Activated naive CD4-positive, alpha-beta T cell treated with anti-CD3 and anti-CD28 coated beads for 36 hours (primary cell): ENCODE measurements at regions of chr11 and their contacts with region 1.

Region 1: GRCh38 chr11:47552566-47553416 is at the start of gene CELF1:
- DNase-seq: peak; percentile 95
- H3K4me3 Mint-ChIP-seq: peak within 1 kb of the TSS; percentile 97
- H3K27ac Mint-ChIP-seq: peak within 1 kb of the TSS; percentile 95
- H3K4me1 Mint-ChIP-seq: peaks cover 42% of the 10 kb centered on the region
- H3K27me3 Mint-ChIP-seq: no peaks in the 10 kb centered on the region
- total RNA-seq, gene CELF1: 104 to 105 TPM

Region 2: DNA sequence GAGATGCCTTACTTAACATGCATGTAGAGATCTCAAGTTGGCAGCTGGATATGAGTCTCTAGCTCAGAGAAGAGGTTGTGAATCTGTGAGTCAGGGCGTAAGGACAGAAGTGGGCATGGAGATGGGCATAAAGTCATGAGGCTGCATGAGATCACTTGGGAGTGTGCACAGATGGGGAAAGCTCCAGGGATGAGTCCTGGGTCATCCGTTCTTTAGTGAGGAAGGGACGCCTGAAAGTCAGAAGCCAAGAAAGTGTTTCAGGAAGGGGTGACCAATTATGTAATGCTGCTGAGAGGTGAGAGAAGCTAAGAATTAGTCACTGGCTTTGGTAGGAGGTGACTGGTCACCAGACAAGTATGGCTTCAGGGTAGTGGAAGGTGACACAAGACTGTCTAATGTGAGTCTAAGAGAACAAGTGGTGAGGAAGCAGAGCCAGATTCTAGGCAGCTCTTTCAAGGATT is 310.9 kb before region 1 on chr11:
- CTCF ChIA-PET with region 1: no interaction called
- intact Hi-C with region 1: no loop called
- DNase-seq: no peak
- H3K4me3 Mint-ChIP-seq: no peak overlapping the region
- H3K27ac Mint-ChIP-seq: peak overlapping the region; percentile 60
- H3K4me1 Mint-ChIP-seq: peaks cover 4% of the 10 kb centered on the region
- H3K27me3 Mint-ChIP-seq: no peaks in the 10 kb centered on the region

Region 3: DNA sequence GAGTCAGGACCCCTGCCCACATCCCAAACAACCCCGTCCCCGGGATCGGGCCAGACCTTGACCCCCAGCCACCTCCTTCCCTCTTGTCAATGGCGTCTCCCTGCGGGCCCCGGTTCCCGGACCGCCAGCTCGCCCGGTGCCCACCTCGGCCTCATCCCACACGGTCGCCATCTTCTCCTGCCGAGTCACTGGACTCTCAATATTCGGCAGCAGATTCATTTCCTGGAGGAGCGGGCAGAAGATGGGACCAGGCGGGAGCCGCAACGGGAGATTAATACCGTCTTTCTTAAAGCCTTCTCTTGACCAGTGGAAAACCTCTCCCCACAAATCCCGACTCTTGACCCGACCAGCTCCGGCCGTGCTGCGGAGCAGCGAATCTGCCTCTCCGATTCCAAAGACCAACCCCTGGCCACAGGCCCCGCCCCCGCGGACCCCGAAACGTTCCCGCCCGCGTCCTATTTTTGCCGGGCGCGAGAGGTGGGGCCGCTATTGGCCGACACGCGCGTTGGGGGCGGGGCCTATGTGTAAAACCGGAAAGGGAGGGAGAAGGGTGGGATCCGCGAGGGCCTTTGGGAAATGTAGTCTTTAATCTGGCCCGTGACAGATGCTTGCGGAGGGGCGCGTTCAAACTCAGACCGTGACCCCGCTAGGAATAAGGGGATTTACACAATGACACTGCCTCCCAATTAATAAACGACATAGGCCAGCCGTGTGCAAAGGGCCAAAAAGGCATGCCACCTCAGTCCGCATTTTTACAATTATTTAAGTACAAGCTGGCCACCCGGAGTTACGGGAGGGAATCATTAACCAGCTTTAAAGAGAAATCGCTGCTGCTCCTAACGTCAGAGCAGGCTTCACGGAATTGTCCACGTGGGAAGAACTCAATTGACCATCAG is 126.5 kb before region 1 on chr11 and contains the start of gene PSMC3:
- CTCF ChIA-PET with region 1: no interaction called
- intact Hi-C with region 1: loop called (anchors 1 kb)
- DNase-seq: peak; percentile 99
- H3K4me3 Mint-ChIP-seq: peak within 1 kb of the TSS; percentile 98
- H3K27ac Mint-ChIP-seq: peak within 1 kb of the TSS; percentile 98
- H3K4me1 Mint-ChIP-seq: peaks cover 26% of the 10 kb centered on the region
- H3K27me3 Mint-ChIP-seq: no peaks in the 10 kb centered on the region
- total RNA-seq, gene PSMC3: 127 to 129 TPM

Region 4: GRCh38 chr11:47514825-47515647 is 37.8 kb before region 1 on chr11:
- CTCF ChIA-PET with region 1: interaction called, 6 read pairs
- intact Hi-C with region 1: loop called (anchors 1 kb)
- DNase-seq: peak; percentile 66
- H3K4me3 Mint-ChIP-seq: no peak overlapping the region
- H3K27ac Mint-ChIP-seq: peak overlapping the region; percentile 28
- H3K4me1 Mint-ChIP-seq: peaks cover 95% of the 10 kb centered on the region
- H3K27me3 Mint-ChIP-seq: no peaks in the 10 kb centered on the region

Region 5: DNA sequence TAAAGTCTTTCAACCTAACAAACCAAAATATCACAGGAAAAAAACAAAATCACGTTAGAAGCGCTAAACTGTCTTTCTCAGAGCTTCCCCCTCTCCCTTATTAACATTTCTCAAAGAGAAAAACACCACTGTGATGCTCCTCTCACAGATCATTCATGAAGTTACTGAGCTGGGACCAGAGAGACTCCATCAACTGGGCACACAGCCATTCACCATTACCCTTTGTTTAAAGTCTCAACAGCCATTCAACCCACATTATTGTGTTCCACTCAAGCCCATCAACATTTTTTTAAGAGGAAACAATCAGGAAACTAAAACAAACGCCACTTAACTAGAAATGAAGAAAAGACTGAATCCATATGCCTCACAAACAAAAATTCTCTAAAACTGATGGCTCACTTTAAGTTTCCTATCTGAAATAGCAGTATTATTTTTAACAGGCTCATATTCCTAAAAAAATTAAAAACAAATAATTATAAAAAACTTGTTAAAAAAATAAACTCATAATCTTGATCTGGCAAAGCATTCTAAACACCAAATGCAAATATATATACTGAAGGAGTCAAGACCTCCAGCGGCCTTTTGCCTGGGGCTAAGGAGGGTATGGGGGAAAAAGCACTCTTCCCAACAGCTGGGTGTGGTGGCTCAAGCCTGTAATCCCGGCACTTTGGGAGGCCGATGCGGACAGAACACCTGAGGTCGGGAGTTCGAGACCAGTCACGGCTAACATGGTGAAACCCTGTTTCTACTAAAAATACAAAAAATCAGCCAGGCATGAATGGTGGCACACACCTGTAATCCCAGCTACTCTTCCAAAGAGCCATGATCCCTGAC is 13.8 kb before region 1 on chr11:
- CTCF ChIA-PET with region 1: interaction called, 23 read pairs
- intact Hi-C with region 1: loop called (anchors 1 kb)
- DNase-seq: no peak
- H3K4me3 Mint-ChIP-seq: no peak overlapping the region
- H3K27ac Mint-ChIP-seq: peak overlapping the region; percentile 91
- H3K4me1 Mint-ChIP-seq: peaks cover 64% of the 10 kb centered on the region
- H3K27me3 Mint-ChIP-seq: no peaks in the 10 kb centered on the region

Region 6: DNA sequence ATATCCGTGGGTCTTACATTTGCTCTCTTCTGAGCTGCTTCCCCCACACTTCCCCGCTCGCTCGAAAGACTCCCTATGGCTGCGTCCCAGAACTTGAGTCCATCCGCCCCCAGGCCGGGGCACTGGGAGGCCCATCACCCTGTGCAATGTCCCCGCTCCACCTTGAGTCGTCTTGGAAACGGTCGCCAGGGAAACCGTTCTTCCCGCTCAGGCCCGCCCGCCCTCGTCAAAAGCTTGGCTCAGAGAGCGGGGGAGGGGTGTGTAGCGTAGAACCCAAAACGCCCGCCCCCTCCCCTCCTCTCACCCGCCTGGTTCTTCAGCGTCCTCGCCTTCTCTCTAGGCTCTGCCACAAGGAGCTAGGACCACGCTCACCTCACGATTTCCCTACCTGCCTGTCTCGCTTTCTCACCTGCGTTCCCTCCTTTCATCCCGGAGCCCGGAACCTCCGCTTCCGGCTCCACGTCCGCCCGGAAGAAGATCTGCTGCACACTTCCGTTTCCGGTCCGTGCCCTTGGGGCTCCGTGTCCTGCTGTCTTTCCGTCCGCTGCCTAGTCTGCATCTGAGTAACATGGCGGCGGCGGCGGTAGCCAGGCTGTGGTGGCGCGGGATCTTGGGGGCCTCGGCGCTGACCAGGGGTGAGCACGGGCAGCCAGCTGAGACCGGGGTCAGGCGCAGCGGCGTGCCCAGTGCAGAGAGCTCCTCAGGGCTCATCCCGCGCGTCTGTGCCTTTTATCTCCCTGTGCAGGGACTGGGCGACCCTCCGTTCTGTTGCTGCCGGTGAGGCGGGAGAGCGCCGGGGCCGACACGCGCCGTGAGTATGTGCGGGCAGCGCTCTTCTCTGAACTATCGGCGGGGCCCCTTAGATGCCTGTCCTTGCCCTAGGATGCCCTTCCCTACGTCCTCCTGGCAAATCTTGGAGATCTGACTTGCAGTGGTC is 26.0 kb after region 1 on chr11 and contains the starts of genes KBTBD4 and NDUFS3:
- CTCF ChIA-PET with region 1: interaction called, 4 read pairs
- intact Hi-C with region 1: loop called (anchors 1 kb)
- DNase-seq: peak; percentile 90
- H3K4me3 Mint-ChIP-seq: peak within 1 kb of the TSS; percentile 97
- H3K27ac Mint-ChIP-seq: peak within 1 kb of the TSS; percentile 97
- H3K4me1 Mint-ChIP-seq: peaks cover 44% of the 10 kb centered on the region
- H3K27me3 Mint-ChIP-seq: no peaks in the 10 kb centered on the region
- total RNA-seq, gene KBTBD4: 13.8 to 15.4 TPM
- total RNA-seq, gene NDUFS3: 123 to 124 TPM

Region 7: DNA sequence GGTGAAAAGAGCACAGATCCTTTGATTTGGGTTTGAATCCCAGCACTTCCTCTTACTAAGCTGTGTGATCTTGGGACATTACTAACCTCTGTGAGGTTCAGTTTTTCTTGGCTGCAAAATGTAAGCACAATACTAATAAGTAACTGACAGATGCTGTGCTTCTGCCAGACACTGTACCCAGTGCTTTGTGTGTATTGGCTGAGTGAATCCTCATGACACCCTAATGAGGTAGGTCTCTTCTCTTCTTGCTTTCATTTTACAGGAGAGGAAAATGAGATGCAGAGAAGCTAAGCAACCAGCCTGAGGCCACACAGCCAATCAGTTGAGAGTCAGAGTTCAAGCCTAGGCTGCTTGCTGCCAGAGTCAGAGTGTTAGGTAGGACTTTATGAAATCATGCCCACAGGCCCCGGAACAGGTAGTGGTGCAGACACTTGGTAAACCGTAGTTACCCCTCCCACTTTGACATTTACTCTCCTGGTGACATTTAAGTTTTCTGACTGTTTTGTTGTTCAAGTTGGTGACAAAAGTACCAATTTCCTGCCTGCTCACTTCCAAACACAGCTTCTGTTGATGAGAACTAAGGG is 448.7 kb after region 1 on chr11:
- CTCF ChIA-PET with region 1: no interaction called
- intact Hi-C with region 1: loop called (anchors 10 kb)
- DNase-seq: peak; percentile 89
- H3K4me3 Mint-ChIP-seq: peak overlapping the region; percentile 66
- H3K27ac Mint-ChIP-seq: peak overlapping the region; percentile 96
- H3K4me1 Mint-ChIP-seq: peaks cover 88% of the 10 kb centered on the region
- H3K27me3 Mint-ChIP-seq: no peaks in the 10 kb centered on the region